Dorsolateral prefrontal cortex (tissue), 120 donors: ENCODE measurements at regions of chr10 and their contacts with region 1.

Region 1: GRCh38 chr10:133124357-133125211 is 35.4 kb upstream of the KNDC1 start:
- DNase-seq: peak in 8 of 10 donors; percentile 8 to 70 (median 42)
- H3K4me3 ChIP-seq: no peak overlapping the region
- H3K27ac ChIP-seq: no peak overlapping the region
- H3K27me3 ChIP-seq: peaks cover 0 to 3% (median 0%) of the 10 kb centered on the region in 45 donors
- CTCF ChIP-seq: peak in 54 of 56 donors; percentile 30 to 82 (median 64)

Region 2: DNA sequence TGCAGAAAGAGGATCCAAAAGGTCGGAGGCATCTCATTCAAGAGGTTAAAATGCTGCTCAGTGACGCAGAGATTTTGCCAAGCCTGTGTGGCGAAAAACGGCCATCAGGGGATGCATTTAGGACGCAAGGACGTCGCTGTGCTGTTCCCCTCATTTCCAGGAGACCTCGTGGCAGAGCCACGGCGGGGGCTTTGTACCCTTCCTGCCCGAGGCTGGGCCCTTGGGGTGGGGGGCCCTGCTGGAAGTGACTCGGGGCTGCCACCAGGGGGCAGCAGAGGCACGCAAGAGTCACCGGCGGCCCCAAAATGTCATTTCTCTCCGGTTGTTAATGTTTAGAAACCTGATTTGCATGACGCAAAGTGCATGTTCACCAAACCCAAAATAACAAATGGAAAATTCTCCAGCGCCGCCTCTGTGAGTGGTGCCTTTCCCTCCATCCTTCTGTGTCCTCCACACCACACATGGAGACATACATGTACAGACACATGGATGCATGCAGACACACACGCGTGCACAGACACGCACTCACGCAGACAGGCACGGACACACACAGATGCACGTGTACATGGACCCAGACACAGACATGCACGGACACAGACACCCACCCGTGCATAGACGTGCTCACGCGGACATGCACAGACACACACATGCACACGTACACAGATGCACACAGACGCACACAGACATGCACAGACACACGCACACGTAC is 287.6 kb before region 1 on chr10:
- intact Hi-C with region 1: loop called (anchors 2 to 10 kb)
- DNase-seq: peak in 6 of 10 donors; percentile 35 to 75 (median 62)
- H3K4me3 ChIP-seq: peak overlapping the region in 30 of 59 donors; percentile 0 to 49 (median 29)
- H3K27ac ChIP-seq: peak overlapping the region in 4 of 59 donors; percentile 8 to 57 (median 26)
- H3K27me3 ChIP-seq: peaks cover 0 to 3% (median 0%) of the 10 kb centered on the region in 45 donors
- CTCF ChIP-seq: peak; percentile 79 to 100 (median 97)

Region 3: DNA sequence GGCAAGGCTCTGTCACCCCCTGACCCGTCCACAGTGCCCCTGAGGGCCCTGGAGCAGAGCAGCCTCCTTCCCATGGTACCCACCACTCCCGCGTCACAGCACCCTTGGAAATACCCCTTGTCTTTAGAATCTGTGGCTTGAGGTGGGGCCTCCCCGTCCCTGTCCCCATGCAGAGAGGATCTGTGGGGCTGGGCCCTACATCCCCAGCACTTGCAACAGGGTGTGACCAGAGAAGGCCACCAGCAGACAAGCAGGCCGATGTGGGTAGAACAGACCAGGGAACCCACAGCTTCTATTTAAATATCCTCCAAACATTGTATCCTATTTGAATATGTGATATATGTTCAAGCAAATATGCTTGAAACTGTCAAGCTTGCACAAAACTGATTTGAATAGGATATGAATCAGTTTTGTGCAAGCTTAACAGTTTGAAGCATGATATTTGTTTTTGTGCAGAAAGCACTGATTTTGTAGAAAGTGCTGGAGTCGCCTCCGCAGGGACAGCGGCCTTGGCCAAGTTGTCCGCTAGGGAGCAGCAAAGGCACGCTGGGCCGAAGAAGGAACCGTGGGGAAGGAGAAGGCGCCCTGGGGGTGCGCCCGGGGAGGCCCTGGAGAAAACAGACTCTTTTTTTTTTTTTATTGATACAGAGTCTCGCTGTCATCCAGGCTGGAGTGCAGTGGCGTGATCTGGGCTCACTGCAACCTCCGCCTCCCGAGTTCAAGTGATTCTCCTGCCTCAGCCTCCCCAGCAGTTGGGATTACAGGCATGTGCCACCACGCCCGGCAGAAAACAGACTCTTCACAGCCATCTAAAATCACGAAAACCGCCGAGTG is 184.4 kb before region 1 on chr10:
- intact Hi-C with region 1: loop called (anchors 1 to 5 kb)
- DNase-seq: peak; percentile 45 to 83 (median 71)
- H3K4me3 ChIP-seq: no peak overlapping the region
- H3K27ac ChIP-seq: peak overlapping the region in 16 of 59 donors; percentile 13 to 85 (median 42)
- H3K27me3 ChIP-seq: peaks cover 0 to 17% (median 0%) of the 10 kb centered on the region in 45 donors
- CTCF ChIP-seq: peak; percentile 38 to 91 (median 82)